ENCODE measurements at regions of chr7 and their contacts with region 1.

Region 1: GRCh38 chr7:74173866-74174605 is at the start of gene EIF4H:
- DNase-seq: peak; percentile 91 to 99 (median 96)
- ATAC-seq: peak; percentile 91
- H3K4me3 ChIP-seq: peak within 1 kb of the TSS; percentile 80 to 83
- H3K4me3 Mint-ChIP-seq: peak within 1 kb of the TSS; percentile 93
- H3K27ac ChIP-seq: peak within 1 kb of the TSS; percentile 82 to 84
- H3K27ac Mint-ChIP-seq: peak within 1 kb of the TSS; percentile 98
- H3K4me1 ChIP-seq: peaks cover 46% of the 10 kb centered on the region
- H3K4me1 Mint-ChIP-seq: peaks cover 49% of the 10 kb centered on the region
- H3K27me3 ChIP-seq: no peaks in the 10 kb centered on the region
- H3K27me3 Mint-ChIP-seq: no peaks in the 10 kb centered on the region
- CTCF ChIP-seq: no peak
- total RNA-seq, gene EIF4H: 330 to 357 TPM

Region 2: GRCh38 chr7:73522105-73522872 is 651.7 kb before region 1 on chr7 and contains the start of gene BAZ1B:
- CTCF ChIA-PET with region 1: no interaction called
- POLR2A ChIA-PET with region 1: no interaction called
- intact Hi-C with region 1: loop called in 1 of 2 experiments (anchors 5 kb)
- DNase-seq: peak; percentile 92 to 98 (median 96)
- ATAC-seq: peak; percentile 93
- H3K4me3 ChIP-seq: peak within 1 kb of the TSS; percentile 65 to 87
- H3K4me3 Mint-ChIP-seq: peak within 1 kb of the TSS; percentile 93
- H3K27ac ChIP-seq: peak within 1 kb of the TSS; percentile 90 to 92
- H3K27ac Mint-ChIP-seq: peak within 1 kb of the TSS; percentile 96
- H3K4me1 ChIP-seq: peaks cover 59% of the 10 kb centered on the region
- H3K4me1 Mint-ChIP-seq: peaks cover 66% of the 10 kb centered on the region
- H3K27me3 ChIP-seq: no peaks in the 10 kb centered on the region
- H3K27me3 Mint-ChIP-seq: no peaks in the 10 kb centered on the region
- CTCF ChIP-seq: no peak
- total RNA-seq, gene BAZ1B: 32.2 to 37.2 TPM

Region 3: DNA sequence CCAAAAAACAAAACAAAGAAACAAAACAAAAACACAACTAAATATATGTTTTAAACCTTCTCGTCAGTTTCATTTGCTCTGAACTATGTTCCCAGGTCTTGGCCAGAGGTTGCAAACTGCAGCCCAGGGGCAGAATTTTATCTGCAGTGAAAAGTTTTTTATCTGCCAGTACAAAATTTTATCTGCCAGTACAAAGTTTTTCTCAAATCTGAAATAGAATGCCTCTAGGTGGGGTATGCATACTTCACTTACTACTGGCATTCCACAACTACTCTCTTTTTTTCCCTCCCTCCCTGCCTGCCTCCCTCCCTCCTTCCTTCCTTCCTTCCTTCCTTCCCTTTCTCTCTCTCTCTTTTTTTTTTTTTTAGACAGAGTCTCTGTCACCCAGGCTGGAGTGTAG is 394.5 kb before region 1 on chr7:
- CTCF ChIA-PET with region 1: no interaction called
- POLR2A ChIA-PET with region 1: no interaction called
- intact Hi-C with region 1: no loop called
- DNase-seq: no peak
- ATAC-seq: no peak
- H3K4me3 ChIP-seq: no peak overlapping the region
- H3K4me3 Mint-ChIP-seq: no peak overlapping the region
- H3K27ac ChIP-seq: no peak overlapping the region
- H3K27ac Mint-ChIP-seq: no peak overlapping the region
- H3K4me1 ChIP-seq: no peaks in the 10 kb centered on the region
- H3K4me1 Mint-ChIP-seq: no peaks in the 10 kb centered on the region
- H3K27me3 ChIP-seq: no peaks in the 10 kb centered on the region
- H3K27me3 Mint-ChIP-seq: peaks cover 2% of the 10 kb centered on the region
- CTCF ChIP-seq: no peak

Region 4: DNA sequence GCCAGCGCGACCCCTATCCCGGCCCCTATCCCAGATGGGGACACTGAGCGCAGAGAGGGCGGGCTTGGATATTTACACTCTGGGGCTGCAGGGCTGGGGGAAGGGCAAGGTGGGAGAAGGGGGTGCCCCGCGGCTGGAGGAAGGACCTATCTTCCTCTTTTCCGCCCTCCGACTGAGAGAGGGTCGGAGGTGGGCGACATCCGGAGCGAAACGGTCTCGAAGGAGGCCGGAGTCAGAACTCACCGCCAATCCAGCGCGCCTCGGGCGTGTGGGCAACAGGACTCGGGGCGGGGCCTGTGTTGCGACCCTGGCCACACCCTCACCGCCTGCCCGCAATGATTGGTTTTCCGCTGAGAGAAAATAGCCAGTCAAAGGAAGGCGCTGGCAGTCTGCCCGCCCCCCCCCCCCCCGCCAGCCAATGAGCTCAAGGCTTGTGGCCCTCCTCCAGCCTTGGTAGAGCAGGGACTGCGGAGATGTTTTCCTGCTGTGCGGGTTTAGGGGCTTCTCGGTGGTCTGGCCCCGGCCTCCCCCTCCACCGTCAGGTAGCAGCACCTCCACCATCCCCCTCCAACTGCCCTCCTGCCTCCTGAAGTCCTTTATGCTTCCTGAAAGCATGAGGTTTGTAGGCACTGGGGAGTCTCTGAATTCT is 331.7 kb before region 1 on chr7 and contains the start of gene METTL27:
- CTCF ChIA-PET with region 1: no interaction called
- POLR2A ChIA-PET with region 1: no interaction called
- intact Hi-C with region 1: loop called in 1 of 2 experiments (anchors 10 kb)
- DNase-seq: peak; percentile 76 to 94 (median 90)
- ATAC-seq: peak; percentile 98
- H3K4me3 ChIP-seq: peak within 1 kb of the TSS; percentile 58 to 77
- H3K4me3 Mint-ChIP-seq: peak within 1 kb of the TSS; percentile 85
- H3K27ac ChIP-seq: no peak within 1 kb of the TSS
- H3K27ac Mint-ChIP-seq: peak within 1 kb of the TSS; percentile 69
- H3K4me1 ChIP-seq: peaks cover 5% of the 10 kb centered on the region
- H3K4me1 Mint-ChIP-seq: peaks cover 13% of the 10 kb centered on the region
- H3K27me3 ChIP-seq: no peaks in the 10 kb centered on the region
- H3K27me3 Mint-ChIP-seq: no peaks in the 10 kb centered on the region
- CTCF ChIP-seq: no peak
- total RNA-seq, gene METTL27: not detected

Region 5: DNA sequence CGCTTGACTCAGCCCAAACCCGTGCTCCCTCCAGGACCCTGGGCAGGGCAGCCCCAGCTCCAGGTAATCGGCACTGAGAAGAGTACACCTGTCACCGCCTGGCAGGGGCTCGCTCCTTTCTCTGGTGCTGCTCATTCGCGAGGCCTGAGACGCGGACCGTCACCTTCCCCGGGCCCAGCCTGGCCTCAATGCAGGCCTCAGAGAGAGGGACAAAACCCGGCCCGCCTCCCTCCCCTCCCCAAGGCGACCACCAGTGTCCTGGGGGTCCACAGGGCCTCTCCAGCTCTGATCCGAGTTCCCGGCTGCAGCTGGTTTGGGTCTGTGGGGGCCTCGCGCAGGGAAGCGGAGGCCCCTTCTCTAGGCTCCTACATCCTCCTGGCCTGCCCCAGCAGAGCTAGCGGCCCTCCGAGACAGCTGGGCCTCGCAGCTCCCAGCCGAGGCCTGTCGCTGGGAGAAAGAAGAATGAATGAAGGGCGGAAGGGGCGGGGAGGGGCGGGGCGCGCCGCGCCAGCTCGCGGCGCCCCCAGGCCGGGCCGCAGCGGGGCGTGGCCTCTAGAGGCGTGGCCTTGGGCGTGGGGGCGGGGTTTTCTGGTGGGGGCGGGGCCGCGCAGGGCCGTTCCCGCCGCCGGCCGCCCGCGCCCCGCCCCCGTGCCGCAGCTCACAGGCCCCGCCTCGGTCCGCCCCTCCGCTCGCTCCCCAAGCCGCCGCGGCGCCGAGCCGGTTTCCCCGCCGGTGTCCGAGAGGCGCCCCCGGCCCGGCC is 90.7 kb before region 1 on chr7 and contains the start of gene LIMK1:
- CTCF ChIA-PET with region 1: no interaction called
- POLR2A ChIA-PET with region 1: interaction called, 11 read pairs
- intact Hi-C with region 1: loop called (anchors 1 kb)
- DNase-seq: peak; percentile 68 to 91 (median 81)
- ATAC-seq: peak; percentile 97
- H3K4me3 ChIP-seq: peak within 1 kb of the TSS; percentile 61
- H3K4me3 Mint-ChIP-seq: peak within 1 kb of the TSS; percentile 81
- H3K27ac ChIP-seq: peak within 1 kb of the TSS in 1 of 2 experiments; percentile 36
- H3K27ac Mint-ChIP-seq: no peak within 1 kb of the TSS
- H3K4me1 ChIP-seq: peaks cover 12% of the 10 kb centered on the region
- H3K4me1 Mint-ChIP-seq: peaks cover 9% of the 10 kb centered on the region
- H3K27me3 ChIP-seq: no peaks in the 10 kb centered on the region
- H3K27me3 Mint-ChIP-seq: no peaks in the 10 kb centered on the region
- CTCF ChIP-seq: no peak
- total RNA-seq, gene LIMK1: 12.8 to 13.7 TPM

Region 6: GRCh38 chr7:74254129-74254857 is 80.3 kb after region 1 on chr7 and contains the start of gene RFC2:
- CTCF ChIA-PET with region 1: no interaction called
- POLR2A ChIA-PET with region 1: no interaction called
- intact Hi-C with region 1: loop called (anchors 1 kb)
- DNase-seq: peak; percentile 93 to 99 (median 97)
- ATAC-seq: peak; percentile 95
- H3K4me3 ChIP-seq: peak within 1 kb of the TSS; percentile 85 to 99
- H3K4me3 Mint-ChIP-seq: peak within 1 kb of the TSS; percentile 93
- H3K27ac ChIP-seq: peak within 1 kb of the TSS; percentile 89 to 93
- H3K27ac Mint-ChIP-seq: peak within 1 kb of the TSS; percentile 96
- H3K4me1 ChIP-seq: peaks cover 17% of the 10 kb centered on the region
- H3K4me1 Mint-ChIP-seq: peaks cover 28% of the 10 kb centered on the region
- H3K27me3 ChIP-seq: no peaks in the 10 kb centered on the region
- H3K27me3 Mint-ChIP-seq: no peaks in the 10 kb centered on the region
- CTCF ChIP-seq: no peak
- total RNA-seq, gene RFC2: 8.8 to 10.7 TPM

Region 7: DNA sequence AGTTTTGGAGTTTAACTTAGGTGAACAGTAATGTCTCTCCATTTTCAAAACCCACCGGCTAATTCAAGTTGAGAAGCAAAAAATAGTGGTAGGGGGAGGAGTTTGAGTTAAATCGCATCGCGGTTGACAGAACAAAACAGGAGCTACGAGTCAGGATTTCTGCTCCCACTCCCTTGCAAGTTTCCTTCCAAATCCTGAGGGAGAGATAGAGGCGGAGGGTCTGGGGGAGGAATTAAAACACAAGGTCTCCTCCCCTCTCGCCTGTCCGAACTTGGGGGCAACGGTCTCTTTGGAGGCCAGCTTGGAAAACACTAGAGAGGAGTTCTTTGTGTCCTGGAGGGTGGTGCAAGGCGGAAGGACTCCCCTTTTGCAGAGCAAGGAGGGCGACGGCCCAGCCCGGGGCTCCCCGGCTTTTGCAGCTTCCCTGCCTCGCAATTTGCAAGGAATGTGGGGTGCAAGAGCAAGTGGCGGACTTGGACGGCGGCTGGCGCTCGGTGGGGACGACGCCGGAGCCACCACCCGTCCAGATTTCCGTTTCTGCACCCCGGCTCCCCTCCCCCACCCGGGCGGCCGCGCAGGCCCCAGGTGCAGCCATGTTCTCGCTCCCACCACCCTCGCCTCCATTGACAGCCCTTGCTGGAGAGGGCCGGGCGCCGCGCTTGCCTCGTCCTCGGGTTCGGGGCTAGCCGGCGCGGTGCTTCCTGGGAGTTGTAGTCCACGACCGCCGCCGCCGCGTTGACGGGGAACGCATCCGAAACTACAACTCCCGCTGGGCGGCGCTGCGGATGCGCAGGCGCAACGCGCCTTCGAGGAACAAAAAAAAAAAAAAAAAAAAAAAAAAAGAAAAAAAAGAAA is 483.0 kb after region 1 on chr7:
- CTCF ChIA-PET with region 1: no interaction called
- POLR2A ChIA-PET with region 1: no interaction called
- intact Hi-C with region 1: loop called (anchors 2 to 10 kb)
- DNase-seq: peak; percentile 95 to 99 (median 98)
- ATAC-seq: peak; percentile 74
- H3K4me3 ChIP-seq: peak overlapping the region; percentile 77 to 88
- H3K4me3 Mint-ChIP-seq: peak overlapping the region; percentile 88
- H3K27ac ChIP-seq: peak overlapping the region; percentile 54 to 69
- H3K27ac Mint-ChIP-seq: peak overlapping the region; percentile 85
- H3K4me1 ChIP-seq: peaks cover 33% of the 10 kb centered on the region
- H3K4me1 Mint-ChIP-seq: peaks cover 45% of the 10 kb centered on the region
- H3K27me3 ChIP-seq: no peaks in the 10 kb centered on the region
- H3K27me3 Mint-ChIP-seq: no peaks in the 10 kb centered on the region
- CTCF ChIP-seq: no peak

Measured in CD8-positive, alpha-beta T cell (primary cell).